Esophagus muscularis mucosa (tissue), 4 donors: ENCODE measurements at regions of chr11 and their contacts with region 1.

Region 1: DNA sequence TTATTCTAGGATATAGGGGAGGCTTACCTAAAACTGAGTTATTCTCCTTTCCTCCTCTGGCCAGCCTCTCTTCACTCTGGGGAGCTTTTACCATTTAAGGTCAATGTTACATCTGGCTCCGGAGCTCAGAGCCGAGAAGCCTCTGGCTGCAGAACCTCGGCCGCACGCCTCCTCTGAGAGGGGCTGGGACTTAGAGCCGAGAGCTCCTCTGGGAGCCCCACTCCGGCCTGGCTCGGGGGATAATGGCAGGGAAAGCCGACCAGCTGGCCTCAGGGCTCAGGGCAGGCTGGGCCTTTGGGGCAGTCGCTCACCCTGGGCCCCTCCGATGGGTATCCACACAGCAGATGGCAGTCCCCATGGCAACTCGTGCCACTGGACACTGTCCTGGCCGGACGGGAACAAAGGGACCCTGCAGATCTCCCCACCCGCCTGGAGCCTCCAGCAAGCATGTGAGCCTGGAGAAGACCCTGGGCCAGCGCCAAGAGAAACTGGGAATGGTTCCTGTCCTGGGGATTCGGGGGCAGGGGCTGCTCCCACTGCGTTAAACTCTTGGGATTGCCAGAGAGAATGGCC is at the start of gene IRAG1:
- DNase-seq: no peak
- H3K4me3 ChIP-seq: peak within 1 kb of the TSS; percentile 52 to 75 (median 68)
- H3K27ac ChIP-seq: peak within 1 kb of the TSS; percentile 90 to 96 (median 95)
- H3K4me1 ChIP-seq: peaks cover 0 to 58% (median 43%) of the 10 kb centered on the region in 4 donors
- H3K27me3 ChIP-seq: no peaks in the 10 kb centered on the region
- CTCF ChIP-seq: no peak
- EP300 ChIP-seq: no peak
- POLR2A ChIP-seq: peak; percentile 14
- total RNA-seq, gene IRAG1: 205 to 338 (median 276) TPM

Region 2: DNA sequence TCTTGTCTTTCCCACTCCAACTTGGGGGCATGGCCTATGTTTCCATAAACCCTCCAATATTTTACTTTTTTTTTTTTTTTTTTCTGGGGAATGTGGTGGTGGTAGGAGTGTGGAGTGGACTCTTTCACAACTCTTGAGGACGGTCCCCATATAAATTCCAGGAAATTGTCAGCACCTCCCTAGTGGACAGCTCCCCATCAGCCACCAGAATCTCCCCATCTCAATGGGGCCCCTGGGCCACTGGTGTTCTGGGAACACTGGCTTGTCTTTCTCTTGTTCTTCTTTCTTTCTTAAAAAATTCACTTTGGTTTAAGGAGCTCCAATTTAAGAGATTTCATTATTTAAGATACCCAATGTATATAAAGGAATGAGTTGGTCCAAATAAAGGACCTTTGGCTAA is 314.6 kb before region 1 on chr11:
- intact Hi-C with region 1: no loop called
- DNase-seq: peak; percentile 68
- H3K4me3 ChIP-seq: no peak overlapping the region
- H3K27ac ChIP-seq: peak overlapping the region; percentile 25 to 65 (median 30)
- H3K4me1 ChIP-seq: peaks cover 12 to 67% (median 48%) of the 10 kb centered on the region in 4 donors
- H3K27me3 ChIP-seq: no peaks in the 10 kb centered on the region
- CTCF ChIP-seq: no peak
- EP300 ChIP-seq: no peak
- POLR2A ChIP-seq: no peak

Region 3: DNA sequence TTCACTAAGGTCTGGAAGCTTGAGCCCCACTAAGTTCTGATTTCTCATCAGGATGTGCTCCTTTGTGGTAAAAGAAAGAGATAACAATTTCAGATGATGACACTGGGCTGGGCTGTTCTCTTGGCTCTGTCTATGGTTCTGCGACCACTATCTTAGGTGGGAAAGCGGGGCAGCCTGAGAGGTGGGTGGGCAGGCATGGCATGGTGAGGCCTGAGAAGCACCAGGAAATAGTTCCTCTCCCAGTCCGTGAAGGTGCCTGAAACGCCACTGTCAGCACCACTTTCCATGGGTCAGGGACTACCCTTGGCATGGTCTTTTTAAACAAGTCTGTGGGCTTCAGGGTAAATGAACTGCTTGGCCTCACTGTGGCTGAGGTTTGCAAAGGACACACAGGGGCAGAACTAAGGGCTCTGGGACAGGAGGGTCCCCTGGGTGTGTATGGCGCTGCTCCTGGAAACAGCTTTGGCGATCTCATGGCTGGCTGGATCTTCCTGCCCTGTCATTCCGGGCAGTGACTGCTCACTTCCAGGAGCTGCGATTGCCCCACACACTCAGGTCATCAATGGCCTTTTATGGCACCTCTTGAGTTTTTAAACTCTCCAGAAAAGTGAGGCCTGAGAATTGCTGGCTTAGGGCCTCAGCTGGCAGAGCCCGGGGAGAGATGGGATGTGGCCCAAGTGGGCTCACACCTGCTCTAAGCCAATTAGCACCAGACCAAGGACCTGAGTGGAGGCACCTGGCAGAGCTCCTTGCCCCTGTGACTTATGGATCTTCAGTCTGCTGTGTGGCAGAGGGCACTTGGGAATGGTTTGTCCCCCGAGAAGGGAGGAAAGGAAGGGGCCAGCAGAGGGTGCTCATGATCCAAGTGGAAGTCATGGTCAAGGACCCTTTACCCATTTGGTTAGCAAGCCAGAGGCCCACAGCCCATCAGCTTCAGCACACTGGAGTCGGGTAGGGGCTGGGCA is 69.5 kb before region 1 on chr11:
- intact Hi-C with region 1: loop called (anchors 10 kb)
- DNase-seq: no peak
- H3K4me3 ChIP-seq: no peak overlapping the region
- H3K27ac ChIP-seq: peak overlapping the region; percentile 80 to 89 (median 86)
- H3K4me1 ChIP-seq: peaks cover 22 to 78% (median 63%) of the 10 kb centered on the region in 4 donors
- H3K27me3 ChIP-seq: no peaks in the 10 kb centered on the region
- CTCF ChIP-seq: peak; percentile 47 to 64 (median 55)
- EP300 ChIP-seq: peak; percentile 80
- POLR2A ChIP-seq: no peak

Region 4: DNA sequence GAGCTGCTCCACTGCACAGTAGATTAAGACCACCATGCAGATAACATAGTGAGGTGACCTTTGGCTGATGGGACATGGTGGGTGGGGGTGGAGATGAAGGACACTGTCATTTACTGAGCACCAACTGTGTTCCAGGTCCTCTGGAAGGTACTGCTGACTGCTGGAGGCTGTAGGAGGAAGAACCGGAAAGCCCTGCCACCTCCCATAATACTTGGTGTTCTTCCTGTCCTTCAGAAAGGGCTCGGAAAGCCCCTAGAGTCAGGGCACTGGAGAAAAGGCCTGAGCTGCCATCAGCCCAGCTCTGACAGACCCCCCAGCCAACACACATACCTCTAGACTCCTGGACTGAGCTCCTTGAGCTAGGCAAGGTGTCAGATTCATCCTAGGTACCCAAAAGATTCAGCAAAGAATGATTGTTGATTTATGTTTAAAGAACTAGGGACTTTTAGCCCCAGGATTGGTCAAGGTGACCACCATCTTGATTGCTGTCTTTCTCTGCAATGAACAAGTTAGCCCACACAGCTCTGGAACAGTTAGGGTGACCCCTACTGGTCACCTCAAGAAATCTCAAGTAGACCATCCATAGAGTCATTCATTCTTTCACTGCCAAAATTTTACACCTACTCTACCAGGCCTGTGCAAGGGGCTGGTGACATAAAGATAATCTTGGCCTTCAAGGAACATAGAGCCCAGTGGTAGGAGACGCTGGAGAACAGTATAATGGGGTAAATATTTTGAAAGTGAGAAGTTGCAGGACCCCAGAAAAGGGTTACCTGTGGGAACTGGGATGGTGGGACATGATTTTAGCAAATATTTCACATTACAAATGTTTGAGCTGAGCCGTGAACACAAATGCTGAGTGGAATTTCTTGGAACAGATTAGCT is 39.4 kb before region 1 on chr11:
- intact Hi-C with region 1: loop called (anchors 2 kb)
- DNase-seq: no peak
- H3K4me3 ChIP-seq: no peak overlapping the region
- H3K27ac ChIP-seq: peak overlapping the region; percentile 85 to 90 (median 86)
- H3K4me1 ChIP-seq: peaks cover 59 to 100% (median 99%) of the 10 kb centered on the region in 4 donors
- H3K27me3 ChIP-seq: no peaks in the 10 kb centered on the region
- CTCF ChIP-seq: peak; percentile 48 to 58 (median 54)
- EP300 ChIP-seq: no peak
- POLR2A ChIP-seq: no peak

Region 5: GRCh38 chr11:10730151-10730550 is 36.6 kb after region 1 on chr11:
- intact Hi-C with region 1: loop called (anchors 5 kb)
- DNase-seq: no peak
- H3K4me3 ChIP-seq: no peak overlapping the region
- H3K27ac ChIP-seq: no peak overlapping the region
- H3K4me1 ChIP-seq: peaks cover 0 to 43% (median 33%) of the 10 kb centered on the region in 4 donors
- H3K27me3 ChIP-seq: no peaks in the 10 kb centered on the region
- CTCF ChIP-seq: no peak
- EP300 ChIP-seq: no peak
- POLR2A ChIP-seq: no peak

Region 6: GRCh38 chr11:11028017-11028692 is 334.6 kb after region 1 on chr11:
- intact Hi-C with region 1: no loop called
- DNase-seq: no peak
- H3K4me3 ChIP-seq: no peak overlapping the region
- H3K27ac ChIP-seq: no peak overlapping the region
- H3K4me1 ChIP-seq: peaks cover 0 to 16% (median 3%) of the 10 kb centered on the region in 4 donors
- H3K27me3 ChIP-seq: no peaks in the 10 kb centered on the region
- CTCF ChIP-seq: peak; percentile 75 to 84 (median 84)
- EP300 ChIP-seq: no peak
- POLR2A ChIP-seq: no peak